H1 (cell line): ENCODE measurements at regions of chr10 and their contacts with region 1.

Region 1: DNA sequence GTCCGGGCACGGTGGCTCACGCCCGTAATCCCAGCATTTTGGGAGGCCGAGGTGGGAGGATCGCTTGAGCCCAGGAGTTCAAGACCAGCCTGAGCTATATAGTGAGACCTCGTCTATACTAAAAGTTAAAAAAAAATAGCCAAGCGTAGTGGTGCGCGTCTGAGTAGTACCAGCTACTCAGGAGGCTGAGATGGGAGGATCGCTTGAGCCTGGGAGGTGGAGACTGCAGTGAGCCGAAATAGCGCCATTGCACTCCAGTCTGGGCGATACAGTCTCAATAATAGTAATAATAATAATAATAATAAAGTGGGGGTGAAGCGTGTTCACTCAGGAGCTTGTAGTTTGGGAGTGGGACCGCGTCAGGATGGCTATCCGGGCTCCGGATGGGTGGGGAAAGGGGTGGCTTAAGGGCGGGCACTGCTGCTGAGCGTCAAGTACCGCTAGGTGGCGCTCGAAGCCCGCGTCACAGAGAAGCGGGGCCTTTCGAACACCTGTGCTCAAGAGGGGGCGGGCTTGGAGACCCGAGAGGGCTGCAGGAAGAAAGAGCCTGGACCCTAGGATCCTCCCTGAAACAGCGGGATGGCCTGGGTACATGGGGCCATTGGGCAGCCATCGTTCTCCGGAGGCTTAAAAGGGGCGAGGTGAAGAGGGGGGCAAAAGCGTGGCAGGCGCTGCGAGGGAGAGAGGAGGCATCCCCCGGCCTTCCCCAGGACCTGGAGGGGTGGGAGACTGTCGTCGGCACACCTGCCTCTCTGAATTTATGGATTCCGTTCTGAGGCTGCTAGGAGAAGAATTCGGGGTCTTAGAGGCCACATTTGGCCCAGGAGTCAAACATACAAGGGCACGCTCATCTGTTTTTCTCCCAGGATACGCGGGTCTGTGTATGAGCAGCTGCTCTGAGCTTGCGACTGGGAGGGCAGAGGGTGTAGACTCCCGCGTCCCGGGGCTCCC is 14.5 kb downstream of the LBX1 start:
- DNase-seq: peak in 1 of 2 experiments; percentile 95
- H3K4me3 ChIP-seq: peak overlapping the region in 3 of 4 experiments; percentile 15 to 59 (median 20); a peak in 4 of 8 replicates
- H3K27ac ChIP-seq: no peak overlapping the region
- H3K4me1 ChIP-seq: peaks cover 0 to 17% (median 9%) of the 10 kb centered on the region in 4 experiments; a peak in 5 of 7 replicates
- H3K27me3 ChIP-seq: peaks cover 55 to 77% (median 68%) of the 10 kb centered on the region in 4 experiments
- CTCF ChIP-seq: peak in 2 of 3 experiments; percentile 88 to 96; a peak in 3 of 4 replicates
- EP300 ChIP-seq: no peak
- POLR2A ChIP-seq: no peak
- RAD21 ChIP-seq: peak; percentile 92 to 93

Region 2: DNA sequence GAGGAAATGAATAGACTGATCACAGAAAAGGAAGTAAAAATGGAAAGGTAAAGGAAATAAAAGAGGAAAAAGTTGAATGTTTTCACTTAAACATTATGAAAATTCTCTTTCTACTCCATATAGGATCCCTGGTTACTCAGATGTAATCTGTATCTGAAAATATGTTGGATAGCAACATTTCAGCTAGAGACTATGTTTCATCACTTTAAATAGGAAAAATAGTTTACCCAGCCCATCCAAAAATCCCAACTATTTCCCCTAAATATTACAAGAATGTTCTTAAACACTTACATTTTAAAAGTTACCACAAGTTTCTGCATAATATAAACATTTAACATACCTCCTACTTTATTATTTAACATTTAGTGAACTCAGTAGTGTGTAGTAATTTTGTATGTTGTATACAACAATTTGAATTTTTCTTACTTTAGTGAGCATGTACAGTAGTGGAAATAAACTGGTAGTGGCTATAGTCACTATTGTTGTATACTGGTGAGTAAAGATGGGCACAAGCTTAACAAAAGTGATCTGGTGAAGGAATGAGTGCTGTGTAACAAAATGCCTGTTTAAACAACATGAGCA is 274.9 kb before region 1 on chr10:
- CTCF ChIA-PET with region 1: no interaction called
- POLR2A ChIA-PET with region 1: no interaction called
- DNase-seq: no peak
- H3K4me3 ChIP-seq: no peak overlapping the region
- H3K27ac ChIP-seq: no peak overlapping the region
- H3K4me1 ChIP-seq: no peaks in the 10 kb centered on the region
- H3K27me3 ChIP-seq: no peaks in the 10 kb centered on the region
- CTCF ChIP-seq: no peak
- EP300 ChIP-seq: no peak
- POLR2A ChIP-seq: no peak
- RAD21 ChIP-seq: no peak

Region 3: DNA sequence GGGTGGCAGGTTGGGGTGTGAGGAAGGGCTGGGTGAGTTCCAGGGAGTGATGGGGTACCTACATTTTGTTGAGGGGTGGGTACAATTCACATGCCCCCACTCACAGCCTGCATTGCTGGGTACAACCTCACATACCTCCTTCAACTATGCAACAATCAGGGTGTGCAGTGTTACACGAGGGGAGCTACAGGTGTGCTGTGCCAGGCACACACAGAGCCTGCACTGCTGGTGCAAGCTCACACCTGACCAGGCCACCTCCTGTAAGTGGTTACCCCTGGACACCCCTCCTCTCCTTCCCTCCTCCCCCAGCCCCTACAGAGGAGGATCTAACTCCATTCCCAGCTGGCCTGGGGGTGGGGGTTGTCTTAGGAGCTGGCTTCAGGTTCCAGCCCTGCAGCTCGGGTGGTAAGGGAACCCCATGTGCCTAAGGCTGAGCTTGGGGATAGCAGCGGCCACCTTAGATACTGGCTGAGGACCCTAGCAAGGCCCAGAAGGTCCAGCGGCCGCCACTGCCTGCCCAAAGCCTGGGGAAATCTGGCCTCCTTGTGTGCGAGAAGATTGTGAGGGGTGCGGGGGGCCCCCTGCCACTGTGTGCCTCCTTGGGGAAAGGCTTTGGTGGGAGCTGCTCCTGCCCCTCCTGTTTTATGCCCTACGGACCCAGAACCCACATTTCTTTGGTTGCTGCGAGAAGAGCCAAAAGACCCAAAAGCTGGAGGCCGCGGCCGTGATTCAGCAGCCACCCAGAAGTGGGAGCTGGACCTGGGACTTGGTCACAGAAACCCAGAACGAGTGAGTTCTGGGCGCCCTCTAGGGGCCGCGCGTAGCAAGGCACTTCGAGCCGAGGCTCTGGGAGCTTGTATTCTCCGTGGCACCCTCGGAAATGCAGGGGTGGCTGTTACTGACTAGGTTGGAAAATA is 72.8 kb before region 1 on chr10:
- CTCF ChIA-PET with region 1: interaction called, 66 read pairs
- POLR2A ChIA-PET with region 1: interaction called, 4 read pairs
- DNase-seq: peak in 1 of 2 experiments; percentile 93
- H3K4me3 ChIP-seq: no peak overlapping the region
- H3K27ac ChIP-seq: no peak overlapping the region
- H3K4me1 ChIP-seq: peaks cover 0 to 18% (median 9%) of the 10 kb centered on the region in 4 experiments; a peak in 5 of 7 replicates
- H3K27me3 ChIP-seq: peaks cover 97 to 100% (median 99%) of the 10 kb centered on the region in 4 experiments
- CTCF ChIP-seq: peak in 2 of 3 experiments; percentile 93 to 95; a peak in 3 of 4 replicates
- EP300 ChIP-seq: no peak
- POLR2A ChIP-seq: no peak
- RAD21 ChIP-seq: peak; percentile 84 to 90

Region 4: GRCh38 chr10:101195921-101196320 is 18.8 kb before region 1 on chr10:
- CTCF ChIA-PET with region 1: interaction called, 14 read pairs
- POLR2A ChIA-PET with region 1: no interaction called
- DNase-seq: no peak
- H3K4me3 ChIP-seq: no peak overlapping the region
- H3K27ac ChIP-seq: no peak overlapping the region
- H3K4me1 ChIP-seq: peaks cover 0 to 4% (median under 1%) of the 10 kb centered on the region in 4 experiments; a peak in 1 of 7 replicates
- H3K27me3 ChIP-seq: no peaks in the 10 kb centered on the region; a peak in 3 of 7 replicates
- CTCF ChIP-seq: no peak
- EP300 ChIP-seq: no peak
- POLR2A ChIP-seq: no peak
- RAD21 ChIP-seq: no peak

Region 5: DNA sequence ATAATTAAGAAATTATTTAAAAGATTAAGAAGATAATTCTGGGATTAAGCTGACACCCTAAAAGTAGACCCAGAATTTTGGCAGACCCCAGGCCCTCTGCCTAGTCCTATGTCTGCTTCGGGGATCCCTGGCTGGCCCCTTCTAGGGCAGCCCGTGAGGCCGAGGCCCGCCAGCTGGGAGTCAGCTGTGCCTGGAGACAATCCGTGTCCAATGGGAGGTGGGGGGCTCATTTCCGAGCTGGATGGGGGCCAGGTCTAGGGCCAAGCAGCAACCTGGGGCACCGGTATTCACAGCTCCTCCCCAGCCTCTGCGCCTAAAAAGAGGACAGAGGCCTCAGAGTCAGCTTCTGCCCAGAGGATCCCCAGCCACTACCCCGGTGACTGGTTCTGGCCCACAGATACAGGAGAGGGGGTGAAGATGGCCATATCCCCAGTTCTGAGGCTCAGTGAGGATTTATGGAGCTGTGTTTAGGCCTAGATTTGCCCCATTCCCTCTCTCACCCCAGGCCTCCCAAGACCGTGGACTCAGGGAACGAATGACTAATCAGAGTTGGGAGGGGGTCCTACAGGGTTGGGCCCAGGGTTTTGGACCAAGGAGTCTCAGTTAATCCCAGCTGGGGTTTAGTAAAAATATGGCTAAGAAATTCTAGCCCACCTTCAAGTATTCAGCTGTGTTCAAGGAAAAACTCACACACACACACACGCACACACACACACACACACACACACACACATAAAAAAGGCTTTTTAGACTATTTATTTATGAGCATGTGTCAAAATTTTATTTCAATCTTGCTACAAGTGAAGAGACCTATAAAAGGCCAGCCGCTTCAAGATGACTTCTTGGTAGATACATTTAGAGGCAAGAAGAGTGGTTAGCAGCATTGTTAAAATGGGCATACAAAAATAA is 51.9 kb after region 1 on chr10:
- CTCF ChIA-PET with region 1: interaction called, 34 read pairs
- POLR2A ChIA-PET with region 1: no interaction called
- DNase-seq: no peak
- H3K4me3 ChIP-seq: no peak overlapping the region
- H3K27ac ChIP-seq: no peak overlapping the region
- H3K4me1 ChIP-seq: peaks cover 0 to 26% (median 14%) of the 10 kb centered on the region in 4 experiments; a peak in 6 of 7 replicates
- H3K27me3 ChIP-seq: peaks cover 0 to 3% (median 0%) of the 10 kb centered on the region in 4 experiments; a peak in 3 of 7 replicates
- CTCF ChIP-seq: no peak
- EP300 ChIP-seq: no peak
- POLR2A ChIP-seq: no peak
- RAD21 ChIP-seq: no peak

Region 6: DNA sequence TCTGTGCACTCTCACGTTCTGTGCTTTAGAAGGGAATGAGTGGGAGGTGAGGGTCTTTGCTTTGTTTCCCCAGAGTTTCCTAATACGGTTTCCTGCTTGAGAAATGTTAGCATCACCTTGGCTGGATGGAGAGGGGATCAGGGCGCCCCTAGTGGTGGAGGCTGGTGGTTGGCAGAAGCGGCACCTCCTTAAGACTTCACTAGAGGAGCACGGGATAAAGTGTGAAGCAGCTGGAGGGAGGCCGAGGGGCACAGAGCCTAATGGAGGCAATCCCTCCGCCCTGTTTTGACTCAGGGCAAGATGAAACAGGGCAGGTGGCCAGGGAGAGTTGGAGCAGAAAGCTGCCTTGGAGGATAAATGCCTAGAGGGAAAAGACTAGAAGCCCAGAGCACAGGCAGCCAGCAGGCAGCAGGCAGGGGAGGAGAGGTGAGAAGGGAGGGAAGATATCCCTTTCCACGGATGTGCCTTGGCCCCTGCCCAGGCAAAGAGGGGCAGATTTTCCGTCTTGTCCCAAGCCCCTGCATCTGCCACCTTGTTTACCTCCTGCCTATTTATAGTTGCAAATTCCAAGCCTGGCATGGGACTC is 83.3 kb after region 1 on chr10:
- CTCF ChIA-PET with region 1: interaction called, 266 read pairs
- POLR2A ChIA-PET with region 1: no interaction called
- DNase-seq: peak; percentile 74 to 96
- H3K4me3 ChIP-seq: no peak overlapping the region
- H3K27ac ChIP-seq: no peak overlapping the region
- H3K4me1 ChIP-seq: peaks cover 0 to 3% (median 0%) of the 10 kb centered on the region in 4 experiments; a peak in 1 of 7 replicates
- H3K27me3 ChIP-seq: peaks cover 7 to 39% (median 29%) of the 10 kb centered on the region in 4 experiments
- CTCF ChIP-seq: peak; percentile 88 to 98 (median 96)
- EP300 ChIP-seq: no peak
- POLR2A ChIP-seq: no peak
- RAD21 ChIP-seq: peak; percentile 51 to 61

Region 7: GRCh38 chr10:101569838-101570766 is 355.4 kb after region 1 on chr10:
- CTCF ChIA-PET with region 1: interaction called, 49 read pairs
- POLR2A ChIA-PET with region 1: interaction called, 12 read pairs
- DNase-seq: peak in 1 of 2 experiments; percentile 95
- H3K4me3 ChIP-seq: peak overlapping the region; percentile 34 to 72 (median 66)
- H3K27ac ChIP-seq: no peak overlapping the region
- H3K4me1 ChIP-seq: peaks cover 0 to 20% (median 10%) of the 10 kb centered on the region in 4 experiments; a peak in 5 of 7 replicates
- H3K27me3 ChIP-seq: peaks cover 7 to 73% (median 57%) of the 10 kb centered on the region in 4 experiments
- CTCF ChIP-seq: peak; percentile 61 to 79 (median 79)
- EP300 ChIP-seq: no peak
- POLR2A ChIP-seq: no peak
- RAD21 ChIP-seq: peak; percentile 75 to 85